Ascending aorta (tissue), 2 donors: ENCODE measurements at regions of chrX and their contacts with region 1.

Region 1: GRCh38 chrX:24024819-24025740 is 1.9 kb downstream of the KLHL15 start:
- DNase-seq: peak; percentile 43 to 90
- H3K4me3 ChIP-seq: peak overlapping the region; percentile 75 to 94
- H3K27ac ChIP-seq: peak overlapping the region; percentile 93 to 96
- H3K4me1 ChIP-seq: no peaks in the 10 kb centered on the region
- H3K27me3 ChIP-seq: no peaks in the 10 kb centered on the region
- CTCF ChIP-seq: no peak

Region 2: GRCh38 chrX:23667239-23668177 is 357.6 kb before region 1 on chrX and contains the start of gene PRDX4:
- intact Hi-C with region 1: loop called (anchors 5 kb)
- DNase-seq: peak; percentile 52 to 90
- H3K4me3 ChIP-seq: peak within 1 kb of the TSS; percentile 61 to 69
- H3K27ac ChIP-seq: peak within 1 kb of the TSS; percentile 74 to 76
- H3K4me1 ChIP-seq: no peaks in the 10 kb centered on the region
- H3K27me3 ChIP-seq: no peaks in the 10 kb centered on the region
- CTCF ChIP-seq: no peak
- total RNA-seq, gene PRDX4: 112 TPM

Region 3: DNA sequence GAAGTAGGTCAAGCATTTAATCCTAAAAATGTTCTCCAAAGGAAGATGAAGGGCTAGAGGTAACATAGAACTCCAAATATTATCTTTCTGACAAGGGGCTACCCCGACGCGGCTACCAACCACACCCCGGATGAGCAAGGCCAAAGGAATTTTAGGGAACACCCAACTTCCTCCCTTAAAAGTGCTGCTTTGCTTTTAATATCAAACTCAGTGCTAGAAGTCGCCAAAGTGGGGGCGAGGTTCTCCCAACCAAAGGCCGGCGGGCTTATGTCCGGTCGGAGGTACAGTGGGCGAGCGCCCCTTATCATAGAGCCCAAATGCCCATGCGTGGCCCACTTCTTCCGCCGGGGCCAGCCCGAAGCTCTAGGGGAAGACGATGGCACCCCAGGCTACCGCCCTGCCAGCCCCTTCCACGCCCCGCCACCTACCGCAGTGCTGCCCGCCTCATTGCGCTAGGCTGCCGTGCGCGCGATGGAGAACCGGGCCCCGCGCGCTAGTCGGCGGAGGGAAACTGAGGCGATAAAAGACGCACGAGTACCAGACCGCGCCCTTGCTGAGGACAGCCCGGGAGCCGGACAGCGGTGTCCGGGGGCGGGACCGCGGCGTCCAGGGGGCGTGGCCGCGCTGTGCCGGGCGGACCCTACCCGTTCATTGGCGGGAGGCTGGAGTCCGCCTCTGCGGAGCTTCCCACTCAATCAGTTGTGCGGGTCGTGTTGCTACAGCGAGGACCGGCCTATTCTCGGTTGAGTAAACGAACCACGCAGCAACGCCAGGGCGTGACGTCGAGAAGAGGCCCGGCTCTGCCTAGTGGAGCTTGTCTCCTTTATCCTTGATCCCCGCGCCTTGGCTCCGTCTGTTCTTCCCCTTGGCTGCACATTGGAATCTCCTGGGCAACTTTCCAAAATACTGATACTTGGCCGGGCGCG is 282.1 kb before region 1 on chrX and contains the start of gene ACOT9:
- intact Hi-C with region 1: loop called (anchors 10 kb)
- DNase-seq: peak; percentile 87 to 97
- H3K4me3 ChIP-seq: peak within 1 kb of the TSS; percentile 71 to 79
- H3K27ac ChIP-seq: peak within 1 kb of the TSS; percentile 93 to 98
- H3K4me1 ChIP-seq: no peaks in the 10 kb centered on the region
- H3K27me3 ChIP-seq: no peaks in the 10 kb centered on the region
- CTCF ChIP-seq: no peak
- total RNA-seq, gene ACOT9: 6.6 TPM

Region 4: GRCh38 chrX:24054182-24055042 is 29.3 kb after region 1 on chrX and contains the start of gene EIF2S3:
- intact Hi-C with region 1: loop called (anchors 1 kb)
- DNase-seq: peak; percentile 70 to 95
- H3K4me3 ChIP-seq: no peak within 1 kb of the TSS
- H3K27ac ChIP-seq: peak within 1 kb of the TSS; percentile 87 to 93
- H3K4me1 ChIP-seq: peaks cover 0 to 13% of the 10 kb centered on the region in 2 donors
- H3K27me3 ChIP-seq: no peaks in the 10 kb centered on the region
- CTCF ChIP-seq: peak; percentile 28 to 77 (median 62)
- total RNA-seq, gene EIF2S3: 60.7 TPM